ENCODE measurements at regions of chr5 and their contacts with region 1.

Region 1: DNA sequence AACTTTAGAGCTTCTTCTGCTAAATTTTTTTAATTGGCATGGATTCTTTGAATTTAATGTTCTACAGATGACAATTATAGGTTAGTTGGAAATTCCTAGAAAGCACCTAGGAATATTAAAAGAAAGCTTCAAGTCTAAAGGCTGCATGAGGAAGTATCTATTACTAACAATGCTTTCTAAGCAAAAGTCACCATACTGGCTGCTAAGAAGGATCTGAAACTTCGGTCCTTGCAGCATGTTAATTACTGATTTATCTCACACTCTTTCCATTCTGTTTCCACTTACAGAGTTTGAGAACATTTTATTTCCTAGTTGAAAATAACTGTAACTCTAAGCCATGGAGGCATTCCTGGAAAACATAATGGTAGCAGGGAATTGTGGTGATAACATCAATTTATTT is 8.4 kb downstream of the SEMA6A start:
- DNase-seq: no peak
- H3K4me3 ChIP-seq: no peak overlapping the region
- H3K27ac ChIP-seq: no peak overlapping the region
- H3K4me1 ChIP-seq: no peaks in the 10 kb centered on the region
- H3K27me3 ChIP-seq: no peaks in the 10 kb centered on the region
- CTCF ChIP-seq: no peak

Region 2: DNA sequence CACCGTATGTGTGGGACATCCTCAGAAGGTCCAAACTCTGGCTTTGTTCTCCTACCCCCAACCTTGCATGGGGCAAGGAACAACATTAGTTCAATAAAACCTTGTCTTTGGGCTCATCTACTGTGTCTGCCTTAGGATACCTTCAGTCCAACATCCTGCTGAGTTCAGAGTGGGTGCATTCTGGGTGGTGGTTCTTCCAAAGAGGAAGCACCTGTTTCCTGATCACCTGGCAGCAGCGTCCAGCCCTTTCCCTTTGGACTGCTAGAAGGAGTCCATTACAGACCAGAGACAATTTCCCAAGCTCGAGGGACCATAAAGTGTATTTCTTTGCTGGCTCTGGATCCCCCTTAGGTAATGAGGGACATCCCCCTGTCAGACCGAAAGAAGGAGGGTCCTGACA is 145.7 kb before region 1 on chr5:
- intact Hi-C with region 1: no loop called
- DNase-seq: no peak
- H3K4me3 ChIP-seq: no peak overlapping the region
- H3K27ac ChIP-seq: no peak overlapping the region
- H3K4me1 ChIP-seq: no peaks in the 10 kb centered on the region
- H3K27me3 ChIP-seq: no peaks in the 10 kb centered on the region
- CTCF ChIP-seq: no peak

Region 3: GRCh38 chr5:116479776-116480675 is 86.2 kb before region 1 on chr5:
- intact Hi-C with region 1: loop called (anchors 10 kb)
- DNase-seq: no peak
- H3K4me3 ChIP-seq: no peak overlapping the region
- H3K27ac ChIP-seq: no peak overlapping the region
- H3K4me1 ChIP-seq: no peaks in the 10 kb centered on the region
- H3K27me3 ChIP-seq: no peaks in the 10 kb centered on the region
- CTCF ChIP-seq: no peak

Measured in colonic mucosa (tissue), 4 donors.